ENCODE measurements at regions of chr12 and their contacts with region 1.

Region 1: GRCh38 chr12:103586132-103586531 is 941 bp upstream of the STAB2 start:
- DNase-seq: no peak
- ATAC-seq: no peak
- H3K4me3 ChIP-seq: no peak overlapping the region
- H3K27ac ChIP-seq: no peak overlapping the region
- H3K4me1 ChIP-seq: no peaks in the 10 kb centered on the region
- H3K27me3 ChIP-seq: peaks cover 0 to 3% (median 0%) of the 10 kb centered on the region in 9 donors
- CTCF ChIP-seq: peak in 3 of 12 donors; percentile 9 to 27 (median 15)
- POLR2A ChIP-seq: no peak

Region 2: DNA sequence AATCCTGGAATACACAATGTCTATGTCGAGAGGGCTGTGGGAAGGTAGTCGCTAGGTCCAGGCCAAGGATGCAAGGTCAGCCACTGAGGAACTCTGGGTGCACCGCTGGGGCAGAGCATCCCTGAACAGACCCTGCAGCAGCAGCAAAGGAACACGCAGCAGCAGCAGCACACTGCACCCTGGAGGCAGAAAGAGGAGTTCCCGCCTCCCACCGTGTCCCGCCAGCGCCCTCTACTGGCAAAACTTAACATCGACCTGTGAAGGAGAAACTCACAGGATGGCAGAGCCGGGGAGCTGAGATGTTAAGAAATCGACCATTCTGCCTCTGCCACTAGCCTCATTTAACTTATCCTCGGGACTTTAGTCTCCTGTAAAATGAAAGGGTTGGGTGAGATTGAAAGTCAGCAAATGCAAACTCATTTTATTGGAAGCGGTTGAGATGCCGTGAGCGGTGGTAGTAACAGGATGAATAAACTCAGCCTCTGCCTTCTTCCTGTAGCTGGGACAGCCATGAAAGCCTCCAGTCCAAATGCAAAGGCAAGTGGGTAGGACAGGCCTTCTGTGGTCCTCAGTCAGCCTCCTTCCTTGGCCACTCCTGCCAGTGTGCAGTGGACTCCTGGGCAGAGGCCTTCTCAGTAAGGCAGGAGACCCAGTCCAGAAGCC is 46.6 kb after region 1 on chr12:
- intact Hi-C with region 1: loop called in 2 of 10 experiments (anchors 5 kb)
- DNase-seq: peak in 2 of 5 donors; percentile 20 to 63
- ATAC-seq: peak in 1 of 4 donors; percentile 36
- H3K4me3 ChIP-seq: no peak overlapping the region
- H3K27ac ChIP-seq: no peak overlapping the region
- H3K4me1 ChIP-seq: peaks cover 0 to 7% (median 0%) of the 10 kb centered on the region in 12 donors
- H3K27me3 ChIP-seq: no peaks in the 10 kb centered on the region
- CTCF ChIP-seq: peak in 10 of 12 donors; percentile 29 to 56 (median 43)
- POLR2A ChIP-seq: no peak

Region 3: DNA sequence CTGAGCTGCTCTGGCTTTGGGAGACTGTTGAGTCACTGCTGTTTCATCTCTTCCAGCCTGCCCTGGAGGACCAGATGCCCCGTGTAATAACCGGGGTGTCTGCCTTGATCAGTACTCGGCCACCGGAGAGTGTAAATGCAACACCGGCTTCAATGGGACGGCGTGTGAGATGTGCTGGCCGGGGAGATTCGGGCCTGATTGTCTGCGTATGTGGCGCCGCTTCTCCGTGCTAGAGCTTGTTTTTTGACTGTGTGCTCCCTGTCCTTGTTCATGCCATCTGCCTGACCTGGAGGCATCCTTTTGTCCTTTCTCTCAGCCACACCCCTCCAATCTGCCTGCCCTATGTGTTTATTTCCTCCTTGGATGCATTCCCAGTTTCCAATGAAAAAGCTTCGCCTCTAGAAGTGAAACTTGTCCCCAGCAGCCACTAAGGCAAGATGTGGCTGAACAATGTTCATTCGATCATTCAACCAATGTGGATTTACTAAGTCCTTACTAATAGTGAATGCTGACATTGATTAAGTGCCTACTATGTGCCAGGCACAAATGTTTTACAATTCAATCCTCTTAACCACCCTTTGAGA is 156.3 kb after region 1 on chr12:
- intact Hi-C with region 1: loop called in 1 of 10 experiments (anchors 10 kb)
- DNase-seq: peak in 2 of 5 donors; percentile 23 to 28
- ATAC-seq: peak; percentile 43 to 80 (median 68)
- H3K4me3 ChIP-seq: no peak overlapping the region
- H3K27ac ChIP-seq: peak overlapping the region in 4 of 12 donors; percentile 3 to 38 (median 10)
- H3K4me1 ChIP-seq: peaks cover 0 to 9% (median 0%) of the 10 kb centered on the region in 12 donors
- H3K27me3 ChIP-seq: no peaks in the 10 kb centered on the region
- CTCF ChIP-seq: no peak
- POLR2A ChIP-seq: no peak

Region 4: GRCh38 chr12:103877934-103878510 is 291.9 kb after region 1 on chr12:
- intact Hi-C with region 1: loop called in 1 of 10 experiments (anchors 10 kb)
- DNase-seq: peak in 4 of 5 donors; percentile 26 to 45 (median 42)
- ATAC-seq: peak; percentile 42 to 78 (median 75)
- H3K4me3 ChIP-seq: no peak overlapping the region
- H3K27ac ChIP-seq: no peak overlapping the region
- H3K4me1 ChIP-seq: peaks cover 0 to 4% (median 0%) of the 10 kb centered on the region in 12 donors
- H3K27me3 ChIP-seq: no peaks in the 10 kb centered on the region
- CTCF ChIP-seq: peak; percentile 49 to 77 (median 70)
- POLR2A ChIP-seq: no peak